GM12878 (cell line): ENCODE measurements at regions of chr1 and their contacts with region 1.

Region 1: GRCh38 chr1:101122452-101123166 is 97.0 kb upstream of the DPH5 start:
- DNase-seq: no peak
- ATAC-seq: peak; percentile 98
- H3K4me3 ChIP-seq: no peak overlapping the region
- H3K27ac ChIP-seq: no peak overlapping the region; the same call in 1 of the 2 replicates
- H3K4me1 ChIP-seq: peaks cover 21% of the 10 kb centered on the region
- H3K27me3 ChIP-seq: no peaks in the 10 kb centered on the region; a peak in 1 of 4 replicates
- CTCF ChIP-seq: no peak
- EP300 ChIP-seq: peak in 1 of 2 experiments; percentile 63; a peak in 1 of 4 replicates
- POLR2A ChIP-seq: no peak
- RAD21 ChIP-seq: peak; percentile 41

Region 2: DNA sequence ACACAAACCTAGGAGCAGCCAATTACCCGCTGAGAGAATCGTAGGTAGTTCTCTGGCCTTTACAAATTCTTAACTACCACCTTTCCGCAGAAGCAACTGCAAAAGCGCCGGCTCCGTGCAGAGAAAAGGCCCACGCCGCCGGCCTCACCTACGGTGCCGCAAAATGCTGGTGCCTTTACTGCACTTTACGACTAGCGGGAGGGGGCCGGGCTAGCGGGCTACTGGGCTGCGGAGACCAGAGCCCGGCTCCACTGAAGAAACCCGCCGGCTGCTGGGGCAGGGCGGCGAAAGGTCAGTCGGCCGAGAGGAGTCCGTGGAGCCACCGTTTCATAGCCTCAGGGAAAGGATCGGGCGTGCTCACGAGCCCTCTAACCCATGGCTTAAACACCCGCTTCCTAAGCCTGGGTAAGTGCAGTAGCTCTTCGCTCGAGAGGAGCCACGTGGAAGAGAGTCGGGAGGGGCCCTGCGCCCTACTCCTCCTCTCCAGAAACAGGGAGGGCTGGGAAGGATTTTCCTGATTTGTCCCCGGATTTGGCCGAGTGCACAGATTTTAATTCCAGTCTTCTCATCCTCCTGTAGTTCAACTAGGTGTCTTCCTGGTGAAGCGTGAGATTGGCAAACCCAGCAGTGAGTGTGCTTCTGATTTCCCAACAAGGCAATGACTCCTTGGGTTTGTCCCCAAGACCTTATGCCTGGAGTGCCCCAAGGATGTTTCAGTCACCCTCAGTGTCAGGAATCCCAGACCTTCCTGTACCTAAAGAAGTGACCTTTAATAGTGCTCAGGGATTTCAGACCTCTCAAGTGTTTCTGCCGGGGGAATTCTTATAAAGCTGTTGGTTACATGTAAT is 96.7 kb before region 1 on chr1 and contains the start of gene DPH5:
- CTCF ChIA-PET with region 1: no interaction called
- POLR2A ChIA-PET with region 1: no interaction called
- RAD21 ChIA-PET with region 1: no interaction called
- SMC1A ChIA-PET with region 1: no interaction called
- in situ Hi-C with region 1: no loop called
- intact Hi-C with region 1: loop called (anchors 5 kb)
- DNase-seq: peak; percentile 66
- ATAC-seq: peak; percentile 88
- H3K4me3 ChIP-seq: peak within 1 kb of the TSS; percentile 74
- H3K27ac ChIP-seq: peak within 1 kb of the TSS; percentile 94
- H3K4me1 ChIP-seq: peaks cover 18% of the 10 kb centered on the region
- H3K27me3 ChIP-seq: no peaks in the 10 kb centered on the region
- CTCF ChIP-seq: no peak
- EP300 ChIP-seq: no peak
- POLR2A ChIP-seq: peak; percentile 98
- RAD21 ChIP-seq: peak; percentile 24; the same call in 1 of the 2 replicates
- polyA plus RNA-seq, gene DPH5: 83.7 to 95.7 TPM

Region 3: DNA sequence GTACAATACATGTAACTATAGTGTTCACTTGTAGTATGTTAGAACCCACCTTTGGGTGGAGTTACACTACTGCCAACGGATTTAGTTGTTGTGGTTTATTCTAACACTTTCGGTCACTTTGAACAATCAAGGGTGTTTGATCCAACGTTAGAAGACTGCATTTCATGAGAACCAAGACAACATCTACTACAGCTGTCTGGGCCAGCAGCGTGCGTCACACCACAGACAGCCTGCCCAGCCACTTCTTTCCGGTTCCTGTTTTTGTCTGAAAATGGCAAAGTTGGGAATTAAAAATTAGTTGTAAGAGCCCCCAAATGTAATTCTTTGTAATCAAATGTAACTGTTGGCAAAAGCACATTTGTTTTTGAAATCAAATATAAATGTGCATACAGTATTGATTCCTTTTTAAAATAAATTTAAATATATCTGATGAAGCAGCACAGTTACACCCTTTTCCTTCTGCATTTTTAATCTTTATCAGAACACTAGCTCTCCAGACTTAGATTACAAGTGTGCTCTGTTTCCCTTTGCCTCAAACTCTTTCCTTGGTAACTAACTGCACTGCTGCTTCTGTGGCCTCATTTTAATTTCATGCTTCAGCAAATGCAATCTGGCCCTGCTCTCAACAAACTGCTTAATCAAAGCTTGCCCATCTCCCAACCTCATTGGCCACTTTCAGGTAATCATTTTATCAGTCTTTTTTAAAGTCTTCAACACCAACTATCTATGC is 10.4 kb before region 1 on chr1:
- CTCF ChIA-PET with region 1: interaction called, 4 read pairs
- POLR2A ChIA-PET with region 1: no interaction called
- RAD21 ChIA-PET with region 1: no interaction called
- SMC1A ChIA-PET with region 1: interaction called, 11 read pairs
- in situ Hi-C with region 1: no loop called
- intact Hi-C with region 1: no loop called
- DNase-seq: peak; percentile 43
- ATAC-seq: peak; percentile 94
- H3K4me3 ChIP-seq: no peak overlapping the region
- H3K27ac ChIP-seq: peak overlapping the region; percentile 27; the same call in 1 of the 2 replicates
- H3K4me1 ChIP-seq: peaks cover 11% of the 10 kb centered on the region
- H3K27me3 ChIP-seq: no peaks in the 10 kb centered on the region
- CTCF ChIP-seq: no peak
- EP300 ChIP-seq: no peak; a peak in 1 of 4 replicates
- POLR2A ChIP-seq: no peak
- RAD21 ChIP-seq: peak; percentile 39; the same call in 1 of the 2 replicates

Region 4: DNA sequence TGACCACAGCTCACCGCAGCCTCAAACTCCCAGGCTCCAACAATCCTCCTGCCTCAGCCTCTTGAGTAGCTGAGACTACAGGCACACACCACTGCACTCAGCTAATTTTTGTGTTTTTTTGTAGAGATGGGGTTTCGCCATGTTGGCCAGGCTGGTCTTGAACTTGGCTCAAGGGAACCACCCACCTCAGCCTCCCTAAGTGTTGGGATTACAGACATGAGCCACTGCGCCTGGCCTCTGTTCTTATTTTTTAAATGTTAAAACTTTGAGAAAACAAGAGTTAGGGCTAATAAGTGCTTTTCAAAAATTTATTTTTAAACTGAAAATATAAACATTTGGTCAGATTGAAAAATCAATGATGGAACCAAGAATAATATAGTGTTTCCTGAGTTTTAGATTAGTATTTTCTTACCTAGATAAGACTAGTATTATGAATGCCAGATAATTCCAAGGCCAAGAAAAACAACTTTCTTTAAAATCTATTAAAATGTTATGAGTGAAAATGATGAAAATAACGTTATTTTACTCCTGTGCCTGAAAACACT is 48.0 kb after region 1 on chr1:
- CTCF ChIA-PET with region 1: no interaction called
- POLR2A ChIA-PET with region 1: no interaction called
- RAD21 ChIA-PET with region 1: no interaction called
- SMC1A ChIA-PET with region 1: no interaction called
- in situ Hi-C with region 1: no loop called
- intact Hi-C with region 1: no loop called
- DNase-seq: no peak
- ATAC-seq: no peak
- H3K4me3 ChIP-seq: no peak overlapping the region
- H3K27ac ChIP-seq: no peak overlapping the region
- H3K4me1 ChIP-seq: no peaks in the 10 kb centered on the region
- H3K27me3 ChIP-seq: no peaks in the 10 kb centered on the region
- CTCF ChIP-seq: no peak
- EP300 ChIP-seq: no peak
- POLR2A ChIP-seq: no peak
- RAD21 ChIP-seq: no peak